ENCODE measurements at regions of chr7 and their contacts with region 1.

Region 1: DNA sequence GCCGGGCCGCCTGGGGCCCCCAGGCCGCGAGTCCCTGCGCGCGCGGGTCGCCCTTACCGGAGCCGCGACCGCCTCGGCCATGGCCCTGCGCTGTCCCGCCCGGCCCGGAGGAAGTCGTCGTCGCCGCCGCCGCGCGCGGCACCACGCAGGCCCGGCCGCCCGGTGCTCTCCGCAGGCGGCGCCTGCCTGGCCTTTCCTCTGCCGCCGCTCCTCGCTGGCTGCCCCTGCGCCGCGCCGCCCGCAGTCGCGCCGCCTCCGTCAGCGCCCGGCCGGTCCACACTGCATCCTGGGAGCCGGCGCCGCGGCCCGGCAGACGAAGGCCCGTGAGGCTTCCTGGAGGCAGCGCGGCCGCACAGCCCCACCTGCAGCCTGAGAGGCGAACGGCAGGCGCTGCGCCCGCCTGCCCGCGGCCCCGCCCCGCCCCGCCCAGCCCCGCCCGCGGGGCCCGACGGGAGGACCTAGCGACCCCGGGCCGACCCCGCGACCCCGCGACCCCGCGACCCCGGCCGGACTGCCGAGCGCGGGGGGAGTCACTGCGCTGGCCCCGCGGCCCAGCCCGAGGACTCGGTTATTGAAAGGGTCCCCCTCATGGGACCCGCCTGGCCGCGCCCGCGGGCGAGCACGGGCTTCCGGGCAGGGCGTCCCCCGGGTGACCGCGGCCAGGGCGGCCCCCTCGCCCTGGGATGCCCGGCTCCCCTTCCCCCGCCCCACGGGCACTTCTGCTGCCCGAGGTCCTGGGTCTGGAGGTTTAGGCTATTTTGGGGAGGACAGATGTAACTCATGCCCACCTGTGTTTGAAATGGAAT is at the start of gene ZNF746:
- DNase-seq: peak; percentile 91
- ATAC-seq: peak; percentile 93
- H3K4me3 Mint-ChIP-seq: peak within 1 kb of the TSS; percentile 93
- H3K27ac Mint-ChIP-seq: peak within 1 kb of the TSS; percentile 91
- H3K4me1 Mint-ChIP-seq: peaks cover 28% of the 10 kb centered on the region
- H3K27me3 Mint-ChIP-seq: no peaks in the 10 kb centered on the region
- total RNA-seq, gene ZNF746: 14.2 to 15.2 TPM

Region 2: GRCh38 chr7:149028346-149029109 is 469.1 kb before region 1 on chr7 and contains the start of gene PDIA4:
- CTCF ChIA-PET with region 1: no interaction called
- POLR2A ChIA-PET with region 1: interaction called, 4 read pairs
- intact Hi-C with region 1: loop called in 1 of 2 experiments (anchors 2 kb)
- DNase-seq: peak; percentile 100
- ATAC-seq: peak; percentile 92
- H3K4me3 Mint-ChIP-seq: peak within 1 kb of the TSS; percentile 99
- H3K27ac Mint-ChIP-seq: peak within 1 kb of the TSS; percentile 94
- H3K4me1 Mint-ChIP-seq: peaks cover 32% of the 10 kb centered on the region
- H3K27me3 Mint-ChIP-seq: no peaks in the 10 kb centered on the region
- total RNA-seq, gene PDIA4: 88.3 to 90.1 TPM

Region 3: DNA sequence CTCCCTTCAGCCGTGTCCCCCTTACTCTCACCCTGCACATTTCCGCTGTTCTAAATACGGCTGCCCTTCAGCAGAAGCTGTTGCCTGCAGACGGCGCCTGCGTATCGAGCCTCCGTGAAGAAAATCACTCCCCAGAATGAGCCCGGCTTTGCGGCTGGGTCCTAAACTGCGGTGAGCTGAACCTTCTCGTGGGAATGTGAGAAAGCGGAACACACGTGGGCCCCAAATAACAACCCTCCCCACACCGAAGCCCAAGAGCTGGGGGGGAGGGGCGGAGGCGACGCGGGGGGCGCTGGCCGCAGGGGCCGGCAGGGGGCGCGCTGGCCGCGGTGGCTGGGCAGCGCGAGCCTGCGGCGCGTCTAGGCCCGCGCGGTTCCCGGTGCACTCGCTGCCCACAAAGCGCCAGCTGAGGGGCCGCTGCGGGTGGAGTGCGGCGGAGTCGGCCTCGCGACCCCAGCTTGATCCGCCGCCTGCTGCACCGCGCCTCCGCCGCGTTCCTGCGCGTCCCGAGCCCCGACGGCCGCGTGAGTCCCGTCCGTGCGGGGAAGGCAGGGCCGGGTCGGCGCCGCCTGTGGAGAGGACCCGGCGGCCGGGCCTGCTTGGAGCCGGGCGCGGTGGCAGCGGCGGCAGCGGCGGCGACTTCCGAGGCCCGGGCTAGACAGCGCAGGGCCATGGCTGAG is 350.4 kb before region 1 on chr7 and contains the start of gene ZNF398:
- CTCF ChIA-PET with region 1: no interaction called
- POLR2A ChIA-PET with region 1: no interaction called
- intact Hi-C with region 1: loop called in 1 of 2 experiments (anchors 1 kb)
- DNase-seq: peak; percentile 87
- ATAC-seq: peak; percentile 71
- H3K4me3 Mint-ChIP-seq: peak within 1 kb of the TSS; percentile 98
- H3K27ac Mint-ChIP-seq: peak within 1 kb of the TSS; percentile 99
- H3K4me1 Mint-ChIP-seq: peaks cover 34% of the 10 kb centered on the region
- H3K27me3 Mint-ChIP-seq: no peaks in the 10 kb centered on the region
- total RNA-seq, gene ZNF398: 9.6 to 10.5 TPM

Region 4: DNA sequence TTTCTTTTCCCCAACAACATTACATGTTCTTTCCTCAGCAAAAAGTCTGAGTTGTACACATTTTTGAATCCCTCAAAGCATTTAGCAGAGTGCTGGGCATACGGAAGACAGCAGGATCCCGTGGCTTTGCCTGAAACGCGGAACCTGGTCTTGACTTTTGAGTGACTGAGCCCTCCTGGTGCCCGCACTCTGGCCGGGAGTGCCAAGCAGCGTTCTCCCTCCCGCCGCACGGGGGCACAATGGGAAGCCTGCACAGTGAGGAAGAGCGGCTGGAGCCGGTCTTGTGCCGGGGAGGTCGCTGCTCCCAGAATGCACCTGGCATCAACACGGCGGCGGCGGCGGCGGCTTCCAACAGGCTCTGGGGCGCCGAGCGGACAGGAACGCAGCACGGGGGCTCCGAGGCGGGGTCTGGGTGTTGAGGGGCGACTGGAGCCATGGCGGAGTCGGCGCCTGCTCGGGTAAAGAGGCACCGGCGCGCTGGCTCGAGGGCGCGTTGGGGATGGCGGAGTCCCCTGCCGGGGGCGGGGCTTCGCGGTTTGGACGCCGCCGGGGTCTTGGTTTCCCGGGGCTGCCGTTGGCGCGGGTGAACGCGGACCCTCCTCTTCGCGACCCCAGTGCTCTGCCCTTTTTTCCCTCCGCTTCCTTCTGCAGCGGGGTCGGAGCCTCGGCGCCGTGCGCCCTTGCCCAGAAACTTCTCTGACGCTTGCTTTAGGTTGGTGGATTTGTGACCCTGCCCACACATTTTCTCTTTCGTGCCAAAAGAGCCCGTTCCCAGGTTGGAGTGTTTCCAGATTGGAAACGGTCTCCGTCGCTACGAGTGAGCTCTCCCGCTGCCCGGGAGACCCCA is 258.1 kb before region 1 on chr7 and contains the start of gene ZNF212:
- CTCF ChIA-PET with region 1: no interaction called
- POLR2A ChIA-PET with region 1: interaction called, 4 read pairs
- intact Hi-C with region 1: loop called in 1 of 2 experiments (anchors 1 kb)
- DNase-seq: peak; percentile 95
- ATAC-seq: peak; percentile 98
- H3K4me3 Mint-ChIP-seq: peak within 1 kb of the TSS; percentile 93
- H3K27ac Mint-ChIP-seq: peak within 1 kb of the TSS; percentile 83
- H3K4me1 Mint-ChIP-seq: peaks cover 32% of the 10 kb centered on the region
- H3K27me3 Mint-ChIP-seq: no peaks in the 10 kb centered on the region
- total RNA-seq, gene ZNF212: 9.9 to 15.9 TPM

Region 5: GRCh38 chr7:149422129-149422913 is 75.3 kb before region 1 on chr7:
- CTCF ChIA-PET with region 1: no interaction called
- POLR2A ChIA-PET with region 1: no interaction called
- intact Hi-C with region 1: loop called (anchors 1 to 2 kb)
- DNase-seq: peak; percentile 84
- ATAC-seq: peak; percentile 98
- H3K4me3 Mint-ChIP-seq: peak overlapping the region; percentile 65
- H3K27ac Mint-ChIP-seq: peak overlapping the region; percentile 63
- H3K4me1 Mint-ChIP-seq: peaks cover 9% of the 10 kb centered on the region
- H3K27me3 Mint-ChIP-seq: no peaks in the 10 kb centered on the region

Region 6: DNA sequence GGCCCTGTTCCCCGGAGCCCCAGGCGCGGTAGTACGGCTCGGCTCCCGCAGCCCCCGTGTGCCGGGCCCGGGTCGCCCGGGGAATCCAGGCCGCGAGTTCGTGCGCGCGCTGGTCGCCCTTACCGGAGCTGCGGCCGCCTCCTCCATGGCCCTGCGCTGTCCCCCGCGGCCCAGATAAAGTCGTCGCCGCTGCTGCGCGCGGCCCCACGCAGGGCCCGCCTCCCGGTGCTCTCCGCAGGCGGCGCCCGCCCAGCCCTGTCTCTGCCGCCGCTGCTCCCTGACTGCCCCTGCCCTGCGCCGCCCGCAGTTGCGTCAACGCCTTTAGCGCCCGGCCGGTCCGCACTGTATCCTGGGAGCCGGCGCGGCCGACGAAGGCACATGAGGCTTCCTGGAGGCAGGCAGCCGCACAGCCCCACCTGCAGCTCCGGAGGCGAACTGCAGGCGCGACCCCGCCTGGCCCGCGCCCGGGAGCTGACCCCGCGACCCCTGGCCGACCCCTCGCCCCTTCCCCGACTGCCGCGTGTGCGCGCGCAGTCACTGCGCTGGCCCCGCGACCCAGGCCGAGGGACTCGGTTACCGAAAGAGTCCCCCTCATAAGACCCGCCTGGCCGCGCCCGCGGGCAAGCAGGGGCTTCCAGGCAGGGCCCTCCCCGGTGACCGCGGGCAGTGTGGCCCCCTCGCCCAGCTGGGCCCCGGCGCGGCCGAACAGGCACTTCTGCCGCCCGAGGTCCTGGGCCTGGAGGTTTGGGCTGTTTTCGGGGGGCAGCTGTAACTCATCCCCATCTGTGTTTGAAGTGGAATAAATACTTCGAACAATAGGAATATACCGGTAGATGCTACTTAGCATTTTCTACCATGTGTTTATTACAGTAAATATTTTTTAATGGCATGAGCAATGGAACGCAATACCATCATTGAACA is 127.0 kb after region 1 on chr7:
- CTCF ChIA-PET with region 1: interaction called, 4 read pairs
- POLR2A ChIA-PET with region 1: no interaction called
- intact Hi-C with region 1: loop called (anchors 1 to 2 kb)
- DNase-seq: peak; percentile 95
- ATAC-seq: peak; percentile 86
- H3K4me3 Mint-ChIP-seq: peak overlapping the region; percentile 80
- H3K27ac Mint-ChIP-seq: peak overlapping the region; percentile 80
- H3K4me1 Mint-ChIP-seq: peaks cover 38% of the 10 kb centered on the region
- H3K27me3 Mint-ChIP-seq: peaks cover 3% of the 10 kb centered on the region

Region 7: GRCh38 chr7:149838224-149838947 is 340.7 kb after region 1 on chr7 and contains the start of gene ZNF862:
- CTCF ChIA-PET with region 1: no interaction called
- POLR2A ChIA-PET with region 1: no interaction called
- intact Hi-C with region 1: loop called in 1 of 2 experiments (anchors 2 kb)
- DNase-seq: peak; percentile 98
- ATAC-seq: peak; percentile 98
- H3K4me3 Mint-ChIP-seq: peak within 1 kb of the TSS; percentile 78
- H3K27ac Mint-ChIP-seq: peak within 1 kb of the TSS; percentile 74
- H3K4me1 Mint-ChIP-seq: peaks cover 28% of the 10 kb centered on the region
- H3K27me3 Mint-ChIP-seq: no peaks in the 10 kb centered on the region
- total RNA-seq, gene ZNF862: 17.6 to 18.3 TPM

Measured in activated CD4-positive, alpha-beta T cell treated with anti-CD3 and anti-CD28 coated beads for 36 hours (primary cell).